ENCODE measurements at regions of chr2 and their contacts with region 1.

Region 1: DNA sequence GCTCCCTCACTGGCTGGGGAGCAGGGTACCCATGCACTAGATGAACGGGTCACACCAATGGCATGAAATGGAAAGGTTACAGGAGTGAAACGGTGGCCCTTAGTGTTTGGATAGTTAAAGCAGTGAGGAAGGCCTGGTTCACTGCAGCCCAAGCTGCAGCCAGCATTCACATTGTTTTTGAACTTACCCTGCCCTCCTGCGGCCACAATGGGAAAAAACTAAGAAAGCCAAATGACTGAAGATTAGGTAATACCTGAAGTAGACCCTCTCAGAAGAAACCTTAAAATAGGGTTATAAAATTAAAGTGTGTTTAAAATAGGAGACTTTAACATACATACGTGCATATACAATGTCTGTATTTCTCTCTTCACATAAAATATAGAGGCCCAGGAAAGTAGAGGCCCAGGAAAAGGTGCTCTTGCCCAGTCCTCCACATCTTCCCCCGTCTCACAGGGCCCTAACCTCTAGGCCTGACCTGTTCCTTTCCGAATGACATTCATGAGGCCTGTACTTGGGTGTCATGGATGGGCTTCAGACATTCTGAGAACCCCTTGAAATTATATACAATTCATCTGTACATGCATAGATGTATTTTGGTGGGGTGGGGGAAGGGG is 33.3 kb downstream of the DOK1 start:
- DNase-seq: peak; percentile 73
- H3K4me3 Mint-ChIP-seq: no peak overlapping the region
- H3K27ac Mint-ChIP-seq: no peak overlapping the region
- H3K4me1 Mint-ChIP-seq: peaks cover 36% of the 10 kb centered on the region
- H3K27me3 Mint-ChIP-seq: peaks cover 13% of the 10 kb centered on the region

Region 2: GRCh38 chr2:74458132-74458925 is 129.4 kb before region 1 on chr2 and contains the start of gene WBP1:
- CTCF ChIA-PET with region 1: interaction called, 34 read pairs
- POLR2A ChIA-PET with region 1: interaction called, 7 read pairs
- DNase-seq: peak; percentile 100
- H3K4me3 Mint-ChIP-seq: peak within 1 kb of the TSS; percentile 88
- H3K27ac Mint-ChIP-seq: peak within 1 kb of the TSS; percentile 95
- H3K4me1 Mint-ChIP-seq: peaks cover 60% of the 10 kb centered on the region
- H3K27me3 Mint-ChIP-seq: no peaks in the 10 kb centered on the region
- total RNA-seq, gene WBP1: 58.3 to 60.4 TPM

Region 3: GRCh38 chr2:74529357-74530238 is 58.2 kb before region 1 on chr2 and contains the starts of genes AUP1 and HTRA2:
- CTCF ChIA-PET with region 1: interaction called, 109 read pairs
- POLR2A ChIA-PET with region 1: interaction called, 46 read pairs
- DNase-seq: peak; percentile 95
- H3K4me3 Mint-ChIP-seq: peak within 1 kb of the TSS; percentile 97
- H3K27ac Mint-ChIP-seq: peak within 1 kb of the TSS; percentile 96
- H3K4me1 Mint-ChIP-seq: peaks cover 55% of the 10 kb centered on the region
- H3K27me3 Mint-ChIP-seq: no peaks in the 10 kb centered on the region
- total RNA-seq, gene AUP1: 118 to 119 TPM
- total RNA-seq, gene HTRA2: 49.2 to 51.1 TPM

Region 4: GRCh38 chr2:74566754-74567085 is 21.1 kb before region 1 on chr2:
- CTCF ChIA-PET with region 1: interaction called, 34 read pairs
- POLR2A ChIA-PET with region 1: interaction called, 7 read pairs
- DNase-seq: no peak
- H3K4me3 Mint-ChIP-seq: no peak overlapping the region
- H3K27ac Mint-ChIP-seq: peak overlapping the region; percentile 48
- H3K4me1 Mint-ChIP-seq: peaks cover 43% of the 10 kb centered on the region
- H3K27me3 Mint-ChIP-seq: peaks cover 5% of the 10 kb centered on the region

Region 5: GRCh38 chr2:74602586-74603281 is 15.0 kb after region 1 on chr2:
- CTCF ChIA-PET with region 1: interaction called, 17 read pairs
- POLR2A ChIA-PET with region 1: interaction called, 10 read pairs
- DNase-seq: no peak
- H3K4me3 Mint-ChIP-seq: no peak overlapping the region
- H3K27ac Mint-ChIP-seq: peak overlapping the region; percentile 13
- H3K4me1 Mint-ChIP-seq: peaks cover 24% of the 10 kb centered on the region
- H3K27me3 Mint-ChIP-seq: peaks cover 22% of the 10 kb centered on the region

Region 6: GRCh38 chr2:74632209-74632938 is 44.6 kb after region 1 on chr2:
- CTCF ChIA-PET with region 1: no interaction called
- POLR2A ChIA-PET with region 1: no interaction called
- DNase-seq: no peak
- H3K4me3 Mint-ChIP-seq: no peak overlapping the region
- H3K27ac Mint-ChIP-seq: no peak overlapping the region
- H3K4me1 Mint-ChIP-seq: no peaks in the 10 kb centered on the region
- H3K27me3 Mint-ChIP-seq: peaks cover 27% of the 10 kb centered on the region